ENCODE measurements at regions of chr7 and their contacts with region 1.

Region 1: GRCh38 chr7:139645572-139646523 is 122.4 kb downstream of the CLEC2L start:
- DNase-seq: peak; percentile 28
- ATAC-seq: peak; percentile 43
- H3K4me3 ChIP-seq: no peak overlapping the region
- H3K27ac ChIP-seq: no peak overlapping the region
- H3K4me1 ChIP-seq: peaks cover 39% of the 10 kb centered on the region
- H3K27me3 ChIP-seq: no peaks in the 10 kb centered on the region
- CTCF ChIP-seq: peak; percentile 81 to 92 (median 87)
- EP300 ChIP-seq: no peak
- POLR2A ChIP-seq: no peak
- RAD21 ChIP-seq: peak; percentile 98

Region 2: DNA sequence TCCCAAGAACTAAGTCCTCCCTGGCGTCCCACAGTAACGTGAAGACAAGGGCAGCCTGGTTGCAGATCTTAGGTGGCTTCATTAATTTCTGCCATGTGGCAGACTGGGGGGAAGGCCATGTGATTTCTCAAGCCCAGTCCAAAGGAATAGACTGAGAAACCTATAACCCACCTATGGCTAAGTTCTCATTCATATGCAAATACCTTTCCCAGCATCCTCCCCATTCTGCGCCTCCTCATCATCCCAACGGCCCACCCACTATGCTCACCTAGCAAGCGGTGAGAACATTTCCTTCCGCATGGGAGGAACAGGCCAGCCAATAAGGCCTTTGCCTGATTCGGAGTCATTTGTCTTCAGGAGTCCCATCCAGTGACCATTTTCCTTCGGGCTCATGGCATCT is 130.6 kb before region 1 on chr7:
- CTCF ChIA-PET with region 1: no interaction called
- POLR2A ChIA-PET with region 1: no interaction called
- RAD21 ChIA-PET with region 1: no interaction called
- SMC1A ChIA-PET with region 1: no interaction called
- in situ Hi-C with region 1: no loop called
- intact Hi-C with region 1: no loop called
- DNase-seq: no peak
- ATAC-seq: no peak
- H3K4me3 ChIP-seq: no peak overlapping the region
- H3K27ac ChIP-seq: no peak overlapping the region
- H3K4me1 ChIP-seq: no peaks in the 10 kb centered on the region
- H3K27me3 ChIP-seq: no peaks in the 10 kb centered on the region
- CTCF ChIP-seq: no peak
- EP300 ChIP-seq: no peak
- POLR2A ChIP-seq: no peak
- RAD21 ChIP-seq: no peak

Region 3: DNA sequence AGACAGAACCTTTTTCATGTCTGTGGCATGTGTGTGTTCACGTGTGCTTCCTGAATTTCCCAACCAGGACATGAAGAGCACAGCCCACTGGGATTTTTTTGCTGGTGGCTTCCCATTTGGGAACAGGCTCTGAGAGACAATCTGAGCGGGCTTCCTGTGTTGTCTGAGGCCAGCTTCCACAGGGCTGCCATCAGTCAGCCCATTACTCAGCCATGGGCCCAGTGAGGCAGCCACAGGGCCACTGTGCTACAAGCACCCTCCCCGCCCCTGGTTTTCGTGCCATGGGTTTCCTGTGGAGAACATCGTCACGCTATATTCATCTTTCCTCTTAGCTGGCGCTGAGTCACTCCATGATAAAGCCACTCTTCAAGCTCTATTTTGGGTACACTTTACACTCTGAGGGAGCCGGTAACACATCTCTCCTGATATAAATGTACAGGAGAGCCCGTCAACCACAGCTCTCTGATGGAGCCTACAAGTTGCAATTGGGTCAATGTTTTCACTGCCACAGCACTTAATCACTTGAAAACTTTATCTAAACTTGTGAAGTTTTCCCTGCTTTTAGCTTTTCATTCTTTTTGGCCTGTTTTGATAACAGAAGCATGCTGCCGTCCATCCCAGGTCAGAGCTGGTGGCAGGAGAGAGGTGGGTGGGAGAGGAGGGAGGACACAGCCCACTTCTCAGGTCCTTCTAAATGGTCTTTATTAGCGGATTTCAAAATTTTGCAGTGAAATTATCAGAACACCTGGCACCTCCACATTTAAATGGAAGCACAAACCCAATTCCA is 35.0 kb after region 1 on chr7:
- CTCF ChIA-PET with region 1: interaction called, 85 read pairs
- POLR2A ChIA-PET with region 1: interaction called, 6 read pairs
- RAD21 ChIA-PET with region 1: interaction called, 95 read pairs
- SMC1A ChIA-PET with region 1: interaction called, 77 read pairs
- in situ Hi-C with region 1: no loop called
- intact Hi-C with region 1: loop called (anchors 2 kb)
- DNase-seq: no peak
- ATAC-seq: peak; percentile 64
- H3K4me3 ChIP-seq: no peak overlapping the region
- H3K27ac ChIP-seq: peak overlapping the region; percentile 58; the same call in 1 of the 2 replicates
- H3K4me1 ChIP-seq: peaks cover 37% of the 10 kb centered on the region
- H3K27me3 ChIP-seq: no peaks in the 10 kb centered on the region
- CTCF ChIP-seq: no peak
- EP300 ChIP-seq: peak in 1 of 2 experiments; percentile 35; a peak in 1 of 4 replicates
- POLR2A ChIP-seq: no peak
- RAD21 ChIP-seq: no peak

Region 4: GRCh38 chr7:139725077-139725476 is 79.2 kb after region 1 on chr7:
- CTCF ChIA-PET with region 1: interaction called, 17 read pairs
- POLR2A ChIA-PET with region 1: interaction called, 3 read pairs
- RAD21 ChIA-PET with region 1: interaction called, 9 read pairs
- SMC1A ChIA-PET with region 1: interaction called, 24 read pairs
- in situ Hi-C with region 1: no loop called
- intact Hi-C with region 1: no loop called
- DNase-seq: peak; percentile 59
- ATAC-seq: peak; percentile 83
- H3K4me3 ChIP-seq: no peak overlapping the region
- H3K27ac ChIP-seq: peak overlapping the region; percentile 39
- H3K4me1 ChIP-seq: peaks cover 25% of the 10 kb centered on the region
- H3K27me3 ChIP-seq: no peaks in the 10 kb centered on the region
- CTCF ChIP-seq: no peak
- EP300 ChIP-seq: peak; percentile 52 to 69; a peak in 3 of 4 replicates
- POLR2A ChIP-seq: no peak
- RAD21 ChIP-seq: no peak

Region 5: DNA sequence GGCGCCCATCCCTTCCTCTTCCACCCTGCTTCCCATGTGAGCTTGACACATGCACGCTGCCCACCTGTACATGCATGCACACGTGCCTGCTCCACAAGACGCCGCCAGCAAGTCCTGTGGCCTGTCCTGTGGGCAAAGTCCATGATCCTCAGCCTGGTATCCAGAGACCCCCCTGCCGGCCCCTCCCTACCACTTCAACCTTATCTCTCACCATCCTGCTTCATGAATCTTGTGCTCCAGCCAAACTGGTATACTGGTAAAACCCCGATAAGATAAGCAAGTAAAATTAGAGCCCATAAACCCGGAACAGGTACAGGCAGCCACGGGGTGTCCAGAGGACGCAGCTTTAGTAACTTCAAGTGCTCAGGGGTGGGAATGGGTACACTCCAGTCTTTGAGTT is 171.4 kb after region 1 on chr7:
- CTCF ChIA-PET with region 1: interaction called, 22 read pairs
- POLR2A ChIA-PET with region 1: no interaction called
- RAD21 ChIA-PET with region 1: interaction called, 7 read pairs
- SMC1A ChIA-PET with region 1: interaction called, 3 read pairs
- in situ Hi-C with region 1: no loop called
- intact Hi-C with region 1: no loop called
- DNase-seq: no peak
- ATAC-seq: no peak
- H3K4me3 ChIP-seq: no peak overlapping the region
- H3K27ac ChIP-seq: no peak overlapping the region
- H3K4me1 ChIP-seq: no peaks in the 10 kb centered on the region
- H3K27me3 ChIP-seq: no peaks in the 10 kb centered on the region; a peak in 1 of 4 replicates
- CTCF ChIP-seq: no peak
- EP300 ChIP-seq: no peak
- POLR2A ChIP-seq: no peak
- RAD21 ChIP-seq: no peak

Region 6: GRCh38 chr7:139901056-139901795 is 255.4 kb after region 1 on chr7:
- CTCF ChIA-PET with region 1: interaction called, 5 read pairs
- POLR2A ChIA-PET with region 1: interaction called, 3 read pairs
- RAD21 ChIA-PET with region 1: interaction called, 6 read pairs
- SMC1A ChIA-PET with region 1: interaction called, 14 read pairs
- in situ Hi-C with region 1: no loop called
- intact Hi-C with region 1: no loop called
- DNase-seq: no peak
- ATAC-seq: no peak
- H3K4me3 ChIP-seq: no peak overlapping the region
- H3K27ac ChIP-seq: no peak overlapping the region
- H3K4me1 ChIP-seq: peaks cover 3% of the 10 kb centered on the region; the same call in 1 of the 2 replicates
- H3K27me3 ChIP-seq: no peaks in the 10 kb centered on the region
- CTCF ChIP-seq: no peak
- EP300 ChIP-seq: no peak
- POLR2A ChIP-seq: no peak
- RAD21 ChIP-seq: no peak

Measured in GM12878 (cell line).